Panc1 (cell line): ENCODE measurements at regions of chr5 and their contacts with region 1.

Region 1: DNA sequence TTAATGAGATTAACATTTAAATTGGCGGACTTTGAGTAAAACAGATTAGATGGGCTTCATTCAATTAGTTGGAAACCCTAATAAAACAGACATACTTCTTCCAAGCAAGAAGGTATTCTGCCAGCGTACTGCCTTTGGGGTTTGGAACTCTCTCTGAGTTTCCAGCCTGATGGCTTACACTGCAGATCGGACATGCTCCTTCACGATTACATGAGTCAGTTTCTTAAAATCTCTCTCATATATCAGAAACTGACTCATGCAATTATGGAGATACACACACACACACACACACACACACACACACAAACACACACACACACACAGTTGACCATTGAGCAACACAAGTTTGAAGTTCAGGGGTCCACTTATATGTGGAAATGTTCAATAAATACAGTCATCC is 789.4 kb downstream of the CDH12 start:
- DNase-seq: no peak
- ATAC-seq: no peak
- H3K4me3 ChIP-seq: no peak overlapping the region
- H3K27ac ChIP-seq: no peak overlapping the region
- H3K4me1 ChIP-seq: no peaks in the 10 kb centered on the region
- H3K27me3 ChIP-seq: no peaks in the 10 kb centered on the region
- CTCF ChIP-seq: no peak

Region 2: DNA sequence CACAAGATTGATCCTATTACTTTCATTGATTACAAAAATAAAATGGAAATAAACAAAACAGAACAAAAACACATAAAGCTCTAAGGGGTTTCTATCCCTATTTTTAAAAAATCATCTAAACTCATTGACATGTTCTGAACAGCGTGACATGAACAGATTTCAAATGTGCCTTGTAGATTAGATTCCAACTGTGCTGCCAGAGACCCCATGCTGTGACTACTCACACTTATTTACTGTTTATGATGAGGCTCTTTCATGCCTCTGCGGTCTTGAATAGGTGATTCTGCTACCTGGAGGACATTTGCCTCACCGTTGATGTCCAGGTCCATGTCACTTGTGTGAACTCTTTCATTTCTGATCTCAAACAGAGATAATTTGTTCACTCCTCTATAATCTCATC is 200.7 kb before region 1 on chr5:
- CTCF ChIA-PET with region 1: no interaction called
- POLR2A ChIA-PET with region 1: interaction called, 14 read pairs
- in situ Hi-C with region 1: no loop called
- intact Hi-C with region 1: no loop called
- DNase-seq: no peak
- ATAC-seq: no peak
- H3K4me3 ChIP-seq: no peak overlapping the region
- H3K27ac ChIP-seq: no peak overlapping the region
- H3K4me1 ChIP-seq: no peaks in the 10 kb centered on the region
- H3K27me3 ChIP-seq: no peaks in the 10 kb centered on the region
- CTCF ChIP-seq: no peak